ENCODE measurements at regions of chr10 and their contacts with region 1.

Region 1: DNA sequence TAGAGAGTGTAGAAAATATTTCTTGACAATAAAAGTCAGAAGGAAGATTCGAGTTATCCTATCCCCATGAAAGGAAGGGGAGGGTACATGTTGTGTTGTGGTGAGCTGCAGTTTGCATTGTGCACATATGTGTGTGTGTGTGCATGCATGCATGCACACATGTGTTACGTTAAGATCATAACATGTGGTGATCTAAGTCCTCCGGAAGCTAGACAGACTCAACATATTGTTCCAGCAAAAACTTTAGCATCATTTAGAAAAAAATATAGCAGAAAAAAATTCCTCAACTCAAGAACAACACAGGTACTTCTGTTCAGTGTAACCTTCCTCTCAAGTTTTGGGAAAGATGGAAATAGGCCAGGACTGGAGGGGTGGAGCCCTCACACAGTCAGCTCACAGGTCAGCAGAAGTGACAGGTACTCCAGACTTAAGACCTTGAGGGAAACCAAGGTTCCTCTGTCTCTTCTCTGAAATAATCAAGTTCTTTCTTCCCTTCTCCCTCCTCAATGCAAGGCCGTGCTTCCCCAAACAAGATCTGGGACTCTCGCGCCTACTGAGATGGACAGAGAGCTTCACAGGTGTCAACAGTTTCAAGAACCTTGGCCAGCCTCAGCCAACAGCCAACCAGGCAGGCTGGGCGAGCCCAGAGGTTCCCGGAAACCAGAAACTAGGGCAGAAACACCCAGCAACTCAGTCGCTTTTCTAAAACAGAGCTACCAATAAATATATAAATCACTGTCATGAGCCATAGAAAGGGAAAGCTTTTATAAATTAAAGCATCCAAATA is 205.2 kb downstream of the FAM107B start:
- DNase-seq: peak; percentile 67
- H3K4me3 Mint-ChIP-seq: peak overlapping the region; percentile 97
- H3K27ac Mint-ChIP-seq: peak overlapping the region; percentile 99
- H3K4me1 Mint-ChIP-seq: peaks cover 81% of the 10 kb centered on the region
- H3K27me3 Mint-ChIP-seq: no peaks in the 10 kb centered on the region

Region 2: GRCh38 chr10:14322526-14323188 is 246.8 kb before region 1 on chr10:
- CTCF ChIA-PET with region 1: no interaction called
- DNase-seq: no peak
- H3K4me3 Mint-ChIP-seq: no peak overlapping the region
- H3K27ac Mint-ChIP-seq: no peak overlapping the region
- H3K4me1 Mint-ChIP-seq: no peaks in the 10 kb centered on the region
- H3K27me3 Mint-ChIP-seq: peaks cover 29% of the 10 kb centered on the region

Region 3: DNA sequence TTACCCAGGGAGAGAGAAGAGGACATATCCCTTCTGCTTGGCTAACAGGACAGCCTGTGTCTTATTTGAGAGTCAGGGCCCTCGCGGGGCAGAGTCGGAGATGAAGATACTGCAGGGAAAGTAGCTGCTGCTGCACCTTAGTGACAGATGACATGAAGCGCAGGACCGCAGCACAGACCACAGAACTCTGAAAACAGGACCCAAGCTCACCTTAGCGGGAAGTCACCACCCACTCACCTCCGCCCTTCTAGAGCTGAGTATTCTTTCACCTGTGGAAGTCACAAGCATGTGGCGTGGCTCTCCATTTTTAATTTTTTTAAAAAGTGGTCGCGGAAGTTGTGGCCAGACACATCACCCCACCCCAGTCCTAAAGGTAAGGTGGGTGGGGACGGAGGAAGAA is 13.8 kb after region 1 on chr10:
- CTCF ChIA-PET with region 1: interaction called, 10 read pairs
- DNase-seq: peak; percentile 92
- H3K4me3 Mint-ChIP-seq: peak overlapping the region; percentile 51
- H3K27ac Mint-ChIP-seq: peak overlapping the region; percentile 99
- H3K4me1 Mint-ChIP-seq: peaks cover 98% of the 10 kb centered on the region
- H3K27me3 Mint-ChIP-seq: no peaks in the 10 kb centered on the region